Sigmoid colon (tissue), 7 donors: ENCODE measurements at regions of chr13 and their contacts with region 1.

Region 1: GRCh38 chr13:51814825-51815650 is 11.1 kb upstream of the DHRS12 start:
- DNase-seq: peak; percentile 78
- H3K4me3 ChIP-seq: peak overlapping the region; percentile 6 to 25 (median 18)
- H3K27ac ChIP-seq: no peak overlapping the region
- H3K4me1 ChIP-seq: peaks cover 0 to 23% (median 15%) of the 10 kb centered on the region in 4 donors
- H3K27me3 ChIP-seq: no peaks in the 10 kb centered on the region
- CTCF ChIP-seq: peak; percentile 75 to 83 (median 79)
- EP300 ChIP-seq: no peak
- POLR2A ChIP-seq: no peak

Region 2: DNA sequence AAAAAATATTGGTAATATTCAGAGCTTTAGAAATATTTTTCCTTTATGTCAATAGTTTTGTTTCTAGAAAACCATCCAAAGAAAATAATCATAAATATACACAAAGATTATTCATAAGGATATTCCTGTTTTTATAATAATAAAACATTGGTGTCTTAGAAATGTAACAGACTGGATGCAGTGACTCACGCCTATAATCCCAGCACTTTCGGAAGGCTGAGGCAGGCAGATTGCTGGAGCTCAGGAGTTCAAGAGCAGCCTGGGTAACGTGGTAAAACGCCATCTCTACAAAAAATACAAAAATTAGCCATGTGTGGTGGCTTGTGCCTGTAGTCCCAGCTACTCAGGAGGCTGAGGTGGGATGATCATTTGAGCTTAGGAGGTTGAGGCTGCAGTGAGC is 117.9 kb before region 1 on chr13:
- intact Hi-C with region 1: no loop called
- DNase-seq: no peak
- H3K4me3 ChIP-seq: no peak overlapping the region
- H3K27ac ChIP-seq: no peak overlapping the region
- H3K4me1 ChIP-seq: no peaks in the 10 kb centered on the region
- H3K27me3 ChIP-seq: no peaks in the 10 kb centered on the region
- CTCF ChIP-seq: no peak
- EP300 ChIP-seq: no peak
- POLR2A ChIP-seq: no peak

Region 3: GRCh38 chr13:51832471-51833152 is 17.6 kb after region 1 on chr13:
- intact Hi-C with region 1: loop called (anchors 1 kb)
- DNase-seq: no peak
- H3K4me3 ChIP-seq: no peak overlapping the region
- H3K27ac ChIP-seq: no peak overlapping the region
- H3K4me1 ChIP-seq: peaks cover 0 to 5% (median 3%) of the 10 kb centered on the region in 4 donors
- H3K27me3 ChIP-seq: no peaks in the 10 kb centered on the region
- CTCF ChIP-seq: peak; percentile 38 to 54 (median 44)
- EP300 ChIP-seq: no peak
- POLR2A ChIP-seq: no peak

Region 4: DNA sequence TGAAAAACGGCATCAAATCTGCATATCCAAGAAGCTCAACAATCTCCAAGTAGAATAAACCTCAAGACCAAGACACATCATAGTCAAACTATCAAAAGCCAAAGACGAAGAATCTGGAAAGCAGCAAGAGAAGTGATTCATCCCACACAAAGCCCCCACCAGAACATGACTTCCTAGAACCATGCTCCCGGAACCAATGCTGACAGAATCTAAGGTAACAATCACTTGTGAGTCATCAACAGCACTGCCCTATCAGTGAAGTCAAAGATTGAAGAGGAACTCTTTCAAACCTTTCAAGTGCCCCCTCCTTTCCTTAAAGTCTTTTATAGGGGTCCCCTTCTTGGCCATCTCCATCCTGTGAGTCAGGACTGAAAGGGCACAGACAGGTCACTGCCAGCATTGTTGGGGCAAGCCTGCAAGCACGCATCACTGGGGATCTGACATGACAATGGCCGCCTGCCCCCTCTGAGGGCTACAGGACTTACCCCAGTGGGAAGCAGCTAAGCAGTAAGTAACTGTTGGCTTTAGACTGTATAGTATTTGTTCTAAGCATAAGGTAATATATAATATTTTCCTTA is 46.8 kb after region 1 on chr13 and contains the start of gene CCDC70:
- intact Hi-C with region 1: no loop called
- DNase-seq: no peak
- H3K4me3 ChIP-seq: no peak within 1 kb of the TSS
- H3K27ac ChIP-seq: no peak within 1 kb of the TSS
- H3K4me1 ChIP-seq: no peaks in the 10 kb centered on the region
- H3K27me3 ChIP-seq: no peaks in the 10 kb centered on the region
- CTCF ChIP-seq: no peak
- EP300 ChIP-seq: no peak
- POLR2A ChIP-seq: no peak
- total RNA-seq, gene CCDC70: not detected

Region 5: GRCh38 chr13:52011632-52012511 is 196.8 kb after region 1 on chr13 and contains the start of gene ALG11:
- intact Hi-C with region 1: loop called (anchors 5 kb)
- DNase-seq: peak; percentile 99
- H3K4me3 ChIP-seq: peak within 1 kb of the TSS; percentile 67 to 92 (median 78)
- H3K27ac ChIP-seq: peak within 1 kb of the TSS; percentile 76 to 79 (median 77)
- H3K4me1 ChIP-seq: peaks cover 0 to 32% (median 19%) of the 10 kb centered on the region in 4 donors
- H3K27me3 ChIP-seq: no peaks in the 10 kb centered on the region
- CTCF ChIP-seq: no peak
- EP300 ChIP-seq: no peak
- POLR2A ChIP-seq: peak; percentile 61 to 65
- total RNA-seq, gene ALG11: 11.6 to 20.6 (median 17.4) TPM